ENCODE measurements at regions of chr17 and their contacts with region 1.

Region 1: DNA sequence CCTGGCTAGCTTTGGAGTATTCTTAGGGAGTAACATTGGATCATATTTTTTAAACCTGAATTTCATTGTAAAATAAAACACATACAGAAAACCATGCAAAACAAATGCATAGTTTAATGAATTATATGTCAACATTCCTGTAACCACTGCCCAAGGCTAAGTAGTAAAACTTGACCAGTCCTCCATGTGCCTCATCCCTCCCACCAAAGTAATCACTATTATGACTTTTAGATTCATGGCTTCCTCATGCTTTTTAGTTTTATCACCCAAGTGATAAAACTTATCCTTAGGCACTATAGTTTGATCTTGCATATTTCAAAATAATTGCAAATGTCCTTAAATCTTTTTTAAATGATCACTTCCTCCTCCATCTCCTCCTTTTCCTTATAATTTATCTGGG is 20.4 kb downstream of the PRKCA start:
- DNase-seq: no peak
- ATAC-seq: no peak
- H3K4me3 ChIP-seq: no peak overlapping the region
- H3K27ac ChIP-seq: no peak overlapping the region
- H3K4me1 ChIP-seq: peaks cover 0 to 6% (median 0%) of the 10 kb centered on the region in 9 donors
- H3K27me3 ChIP-seq: no peaks in the 10 kb centered on the region
- CTCF ChIP-seq: no peak

Region 2: DNA sequence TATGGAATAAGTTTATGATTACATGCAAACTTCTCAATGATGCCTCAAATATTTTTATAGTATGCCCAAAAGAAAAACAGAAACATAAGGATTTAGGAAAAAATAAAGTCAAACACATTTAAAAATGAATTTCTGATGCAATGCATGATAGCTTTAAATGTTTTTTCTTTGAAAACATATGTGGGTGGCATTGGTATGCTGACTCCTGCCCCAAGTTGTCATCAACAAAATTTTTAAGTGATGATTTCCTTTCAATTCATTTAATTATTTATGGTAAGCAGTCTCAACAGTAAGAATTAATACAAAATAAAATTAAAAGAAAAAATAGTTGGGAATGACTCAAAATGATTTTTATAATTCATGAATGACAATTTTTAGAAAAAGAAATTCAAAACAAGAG is 235.7 kb before region 1 on chr17:
- intact Hi-C with region 1: no loop called
- DNase-seq: no peak
- ATAC-seq: no peak
- H3K4me3 ChIP-seq: no peak overlapping the region
- H3K27ac ChIP-seq: no peak overlapping the region
- H3K4me1 ChIP-seq: no peaks in the 10 kb centered on the region
- H3K27me3 ChIP-seq: no peaks in the 10 kb centered on the region
- CTCF ChIP-seq: no peak

Region 3: GRCh38 chr17:66268247-66268927 is 54.4 kb before region 1 on chr17:
- intact Hi-C with region 1: loop called in 1 of 10 experiments (anchors 10 kb)
- DNase-seq: no peak
- ATAC-seq: no peak
- H3K4me3 ChIP-seq: no peak overlapping the region
- H3K27ac ChIP-seq: no peak overlapping the region
- H3K4me1 ChIP-seq: peaks cover 0 to 5% (median 0%) of the 10 kb centered on the region in 9 donors
- H3K27me3 ChIP-seq: no peaks in the 10 kb centered on the region
- CTCF ChIP-seq: no peak

Region 4: DNA sequence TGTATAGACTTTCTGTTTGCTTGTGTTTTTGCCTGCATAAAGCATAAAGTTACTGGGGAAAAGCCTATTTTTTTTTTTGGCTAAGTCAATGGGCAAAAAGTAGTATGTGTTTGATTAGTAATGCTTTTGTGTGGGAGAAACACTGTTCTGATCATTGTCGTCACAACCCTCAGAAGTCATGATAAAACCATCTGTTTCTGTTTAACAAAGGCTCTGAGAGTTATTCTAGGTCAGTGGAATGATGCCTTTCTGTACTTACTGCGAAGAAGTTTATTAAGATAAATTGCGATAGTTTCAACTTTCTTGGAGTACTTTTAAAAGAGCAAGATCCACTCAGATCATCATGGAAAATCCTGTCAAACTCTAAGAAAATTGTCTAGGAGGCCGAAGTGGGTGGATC is 60.6 kb after region 1 on chr17:
- intact Hi-C with region 1: loop called in 1 of 10 experiments (anchors 10 kb)
- DNase-seq: no peak
- ATAC-seq: peak in 5 of 8 donors; percentile 29 to 70 (median 48)
- H3K4me3 ChIP-seq: no peak overlapping the region
- H3K27ac ChIP-seq: no peak overlapping the region
- H3K4me1 ChIP-seq: peaks cover 0 to 21% (median 0%) of the 10 kb centered on the region in 9 donors
- H3K27me3 ChIP-seq: no peaks in the 10 kb centered on the region
- CTCF ChIP-seq: no peak